Right ventricle myocardium inferior (tissue), 1 donor: ENCODE measurements at regions of chr6 and their contacts with region 1.

Region 1: DNA sequence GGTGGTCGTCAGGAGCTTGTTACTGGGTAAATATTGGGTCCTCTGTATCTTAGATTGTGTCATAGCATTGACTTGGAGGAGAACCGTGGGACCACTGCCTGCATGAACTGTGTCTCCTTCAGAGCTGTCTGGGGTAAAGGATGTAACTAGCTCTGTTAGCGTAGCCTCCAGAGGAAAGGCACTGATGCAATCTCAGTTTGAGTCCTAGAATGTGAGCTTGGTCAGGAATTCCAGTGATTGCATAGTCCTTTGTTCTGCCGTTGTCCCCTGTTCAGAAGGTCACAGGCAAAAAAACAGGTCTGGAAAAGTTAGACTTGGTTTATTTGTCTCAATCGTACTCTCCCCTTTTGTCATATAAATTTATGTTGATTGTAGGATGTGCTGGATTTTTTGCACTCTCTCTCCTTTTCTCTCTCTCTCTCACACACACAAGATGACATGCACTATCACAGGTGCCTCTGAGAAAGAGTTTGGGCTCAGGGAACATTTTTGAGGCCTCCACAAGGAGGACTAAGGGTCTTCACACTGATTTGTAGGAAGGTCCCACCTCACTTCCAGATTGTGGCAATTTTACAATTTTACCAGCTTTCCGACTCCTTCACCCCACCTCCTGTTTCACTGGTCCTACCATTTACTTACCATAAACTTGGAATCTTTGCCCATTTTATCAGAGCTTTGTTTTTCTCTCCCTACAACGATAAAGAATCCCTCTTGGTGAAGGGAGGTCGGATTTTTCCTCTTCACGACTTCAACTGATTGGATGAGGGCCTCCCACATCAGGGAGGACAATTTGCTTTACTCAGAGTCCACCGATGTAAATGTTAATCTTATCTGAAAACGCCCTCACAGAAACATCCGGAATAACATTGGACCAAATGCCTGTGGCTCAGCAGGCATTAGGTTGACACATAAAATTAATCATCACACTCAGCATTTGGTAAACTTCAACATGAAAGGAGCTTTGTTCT is 7.0 kb upstream of the DACT2 start:
- DNase-seq: no peak
- ATAC-seq: peak; percentile 90

Region 2: GRCh38 chr6:168179133-168179532 is 147.4 kb before region 1 on chr6:
- intact Hi-C with region 1: loop called (anchors 10 kb)
- DNase-seq: no peak
- ATAC-seq: no peak